Calu3 (cell line): ENCODE measurements at regions of chr15 and their contacts with region 1.

Region 1: DNA sequence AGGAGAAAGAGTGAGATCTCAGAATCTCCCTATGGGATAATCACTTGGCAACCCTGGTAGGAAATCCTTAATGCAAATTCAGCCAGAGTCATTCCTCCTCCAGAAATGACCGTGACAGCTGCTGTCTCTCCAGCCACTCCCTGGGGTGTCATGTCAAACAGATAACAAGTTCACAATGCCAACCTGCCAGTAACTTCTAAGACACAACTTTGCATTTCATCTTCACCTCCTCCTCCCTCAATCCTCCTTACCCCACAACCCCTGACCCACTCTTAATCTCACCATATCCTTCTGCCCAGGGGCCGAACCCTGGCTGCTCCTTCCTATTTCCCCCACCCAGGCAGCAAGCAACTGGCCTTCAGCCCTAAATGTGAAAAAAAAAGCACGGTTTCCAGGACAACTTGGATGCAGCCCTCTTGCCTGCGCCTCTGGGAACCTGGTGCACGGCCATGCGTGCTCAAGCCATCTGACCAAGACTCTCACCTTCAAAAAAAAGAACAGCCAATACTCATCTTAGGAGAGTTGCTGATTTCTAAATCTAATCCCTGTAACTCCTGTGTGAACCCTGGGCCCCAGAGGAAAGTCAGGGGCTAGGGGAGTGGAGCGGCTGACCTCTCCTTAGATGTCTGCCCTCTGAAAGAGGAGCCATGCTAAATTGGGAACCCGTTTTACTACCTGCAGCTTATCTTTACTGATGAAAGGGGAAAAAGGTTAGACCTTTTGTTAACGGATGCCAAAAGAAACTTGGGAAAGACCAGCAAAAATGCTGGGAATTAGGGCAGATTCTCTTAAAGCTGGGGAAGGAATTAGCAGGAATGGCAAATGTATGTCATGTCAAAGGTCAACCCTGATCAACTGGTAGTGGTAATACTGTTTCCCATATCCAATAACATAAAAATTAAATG is 165.8 kb downstream of the NTRK3 start:
- DNase-seq: no peak
- H3K4me3 Mint-ChIP-seq: no peak overlapping the region
- H3K27ac Mint-ChIP-seq: no peak overlapping the region
- H3K4me1 Mint-ChIP-seq: no peaks in the 10 kb centered on the region
- H3K27me3 Mint-ChIP-seq: peaks cover 36% of the 10 kb centered on the region
- CTCF ChIP-seq: no peak

Region 2: DNA sequence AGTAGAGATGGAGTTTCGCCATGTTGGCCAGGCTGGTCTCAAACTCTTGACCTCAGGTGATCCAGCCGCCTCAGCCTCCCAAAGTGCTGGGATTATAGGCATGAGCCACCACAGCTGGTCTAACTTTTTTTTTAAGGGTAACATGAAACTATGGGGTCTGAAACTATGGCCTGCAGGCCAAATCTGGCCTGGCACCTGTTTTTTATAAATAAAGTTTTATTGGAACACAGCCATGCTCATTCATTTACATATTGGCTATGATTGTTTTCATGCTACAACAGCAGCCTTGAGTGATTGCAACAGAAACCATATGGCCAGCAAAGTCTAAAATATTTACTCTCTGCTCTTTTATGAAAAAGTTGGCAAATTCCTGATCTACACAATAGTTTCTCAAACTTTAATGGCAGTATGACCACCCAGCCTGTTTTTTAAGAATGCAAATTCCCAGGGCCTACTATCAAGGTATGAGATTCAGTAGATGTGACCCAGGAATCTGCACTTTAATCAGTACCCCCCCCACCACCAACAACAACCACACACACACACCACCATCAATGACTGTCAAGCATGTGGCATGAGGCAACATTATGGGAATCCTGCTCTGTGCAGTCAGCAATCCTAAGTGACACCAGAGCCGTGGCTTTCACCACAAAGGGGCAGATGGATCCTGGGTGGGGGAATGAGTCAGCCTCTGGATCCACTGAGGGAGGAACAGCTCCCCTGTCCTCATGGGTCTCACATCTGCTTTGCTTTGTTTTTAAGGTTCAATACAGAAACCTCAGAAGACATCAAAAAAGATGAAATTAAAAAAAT is 23.0 kb after region 1 on chr15:
- CTCF ChIA-PET with region 1: no interaction called
- intact Hi-C with region 1: loop called (anchors 1 kb)
- DNase-seq: no peak
- H3K4me3 Mint-ChIP-seq: no peak overlapping the region
- H3K27ac Mint-ChIP-seq: no peak overlapping the region
- H3K4me1 Mint-ChIP-seq: no peaks in the 10 kb centered on the region
- H3K27me3 Mint-ChIP-seq: peaks cover 50% of the 10 kb centered on the region
- CTCF ChIP-seq: no peak